SK-N-SH (cell line): ENCODE measurements at regions of chr1 and their contacts with region 1.

Region 1: DNA sequence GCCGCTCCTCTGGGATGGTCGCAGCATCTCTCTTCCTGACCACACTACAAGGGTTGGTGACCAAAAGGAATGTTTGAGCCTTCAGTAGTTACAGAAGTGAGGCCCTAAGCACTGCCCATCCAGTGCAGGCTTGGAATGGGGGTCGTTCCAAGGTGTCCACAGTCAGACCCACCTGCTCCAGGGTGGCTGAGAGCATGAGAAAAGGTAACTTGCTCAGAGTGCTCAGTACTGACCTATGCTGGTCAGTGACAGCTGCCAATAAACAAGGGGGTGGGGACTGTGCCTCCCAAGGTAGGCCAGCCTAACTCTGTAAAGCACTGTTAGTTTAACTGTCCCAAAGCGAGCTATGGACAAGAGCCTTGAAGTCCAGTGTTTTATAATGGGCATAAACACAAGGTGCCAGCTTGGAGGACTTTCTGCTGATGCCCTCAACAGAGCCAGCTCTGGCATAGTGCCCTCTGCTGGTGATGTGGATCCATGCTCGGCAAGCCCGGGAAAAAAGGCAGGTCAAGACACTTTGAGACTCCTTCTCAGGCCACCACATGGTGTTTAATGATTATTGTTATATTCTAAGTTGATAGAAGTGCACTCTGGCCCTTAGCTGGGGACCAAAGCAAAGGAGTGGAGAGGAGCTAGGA is 78.1 kb upstream of the DNAH14 start:
- DNase-seq: peak; percentile 45
- H3K4me3 ChIP-seq: no peak overlapping the region
- H3K27ac ChIP-seq: no peak overlapping the region
- H3K4me1 ChIP-seq: no peaks in the 10 kb centered on the region
- H3K27me3 ChIP-seq: no peaks in the 10 kb centered on the region
- CTCF ChIP-seq: peak; percentile 80
- EP300 ChIP-seq: no peak
- RAD21 ChIP-seq: peak; percentile 68

Region 2: GRCh38 chr1:224521904-224522734 is 329.2 kb before region 1 on chr1:
- CTCF ChIA-PET with region 1: interaction called, 15 read pairs
- POLR2A ChIA-PET with region 1: no interaction called
- DNase-seq: no peak
- H3K4me3 ChIP-seq: no peak overlapping the region
- H3K27ac ChIP-seq: no peak overlapping the region
- H3K4me1 ChIP-seq: peaks cover 0 to 7% of the 10 kb centered on the region in 2 experiments; a peak in 1 of 4 replicates
- H3K27me3 ChIP-seq: no peaks in the 10 kb centered on the region
- CTCF ChIP-seq: peak; percentile 28
- EP300 ChIP-seq: no peak
- RAD21 ChIP-seq: no peak

Region 3: GRCh38 chr1:224700915-224701531 is 150.3 kb before region 1 on chr1:
- CTCF ChIA-PET with region 1: interaction called, 19 read pairs
- POLR2A ChIA-PET with region 1: no interaction called
- DNase-seq: peak; percentile 44
- H3K4me3 ChIP-seq: no peak overlapping the region
- H3K27ac ChIP-seq: no peak overlapping the region
- H3K4me1 ChIP-seq: no peaks in the 10 kb centered on the region; a peak in 1 of 4 replicates
- H3K27me3 ChIP-seq: no peaks in the 10 kb centered on the region
- CTCF ChIP-seq: peak; percentile 55
- EP300 ChIP-seq: no peak
- RAD21 ChIP-seq: peak; percentile 50

Region 4: DNA sequence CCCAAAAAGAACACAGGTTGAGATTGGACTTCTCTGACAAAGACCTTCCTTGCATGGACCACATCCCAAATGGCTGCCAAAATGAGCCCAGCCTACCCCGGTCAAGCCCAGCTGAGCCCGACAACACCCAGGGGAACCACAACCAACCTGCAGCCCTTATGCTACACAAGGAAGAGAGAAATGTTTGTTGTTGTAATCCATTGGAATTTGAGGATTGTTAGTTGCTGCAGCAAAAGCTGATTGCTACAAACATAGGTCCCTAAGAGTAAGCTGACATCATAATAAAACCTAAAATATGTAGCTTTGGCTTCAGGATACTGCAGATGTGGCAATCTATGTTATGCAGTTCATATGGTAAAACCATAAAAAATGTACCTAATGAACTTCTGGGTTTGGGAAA is 12.6 kb after region 1 on chr1:
- CTCF ChIA-PET with region 1: interaction called, 15 read pairs
- POLR2A ChIA-PET with region 1: no interaction called
- DNase-seq: no peak
- H3K4me3 ChIP-seq: no peak overlapping the region
- H3K27ac ChIP-seq: no peak overlapping the region
- H3K4me1 ChIP-seq: no peaks in the 10 kb centered on the region
- H3K27me3 ChIP-seq: no peaks in the 10 kb centered on the region
- CTCF ChIP-seq: no peak
- EP300 ChIP-seq: no peak
- RAD21 ChIP-seq: no peak

Region 5: GRCh38 chr1:224906340-224906739 is 55.0 kb after region 1 on chr1:
- CTCF ChIA-PET with region 1: interaction called, 20 read pairs
- POLR2A ChIA-PET with region 1: no interaction called
- DNase-seq: no peak
- H3K4me3 ChIP-seq: no peak overlapping the region
- H3K27ac ChIP-seq: no peak overlapping the region
- H3K4me1 ChIP-seq: peaks cover 0 to 7% of the 10 kb centered on the region in 2 experiments; a peak in 2 of 4 replicates
- H3K27me3 ChIP-seq: no peaks in the 10 kb centered on the region
- CTCF ChIP-seq: no peak
- EP300 ChIP-seq: no peak
- RAD21 ChIP-seq: no peak